ENCODE measurements at regions of chr6 and their contacts with region 1.

Region 1: DNA sequence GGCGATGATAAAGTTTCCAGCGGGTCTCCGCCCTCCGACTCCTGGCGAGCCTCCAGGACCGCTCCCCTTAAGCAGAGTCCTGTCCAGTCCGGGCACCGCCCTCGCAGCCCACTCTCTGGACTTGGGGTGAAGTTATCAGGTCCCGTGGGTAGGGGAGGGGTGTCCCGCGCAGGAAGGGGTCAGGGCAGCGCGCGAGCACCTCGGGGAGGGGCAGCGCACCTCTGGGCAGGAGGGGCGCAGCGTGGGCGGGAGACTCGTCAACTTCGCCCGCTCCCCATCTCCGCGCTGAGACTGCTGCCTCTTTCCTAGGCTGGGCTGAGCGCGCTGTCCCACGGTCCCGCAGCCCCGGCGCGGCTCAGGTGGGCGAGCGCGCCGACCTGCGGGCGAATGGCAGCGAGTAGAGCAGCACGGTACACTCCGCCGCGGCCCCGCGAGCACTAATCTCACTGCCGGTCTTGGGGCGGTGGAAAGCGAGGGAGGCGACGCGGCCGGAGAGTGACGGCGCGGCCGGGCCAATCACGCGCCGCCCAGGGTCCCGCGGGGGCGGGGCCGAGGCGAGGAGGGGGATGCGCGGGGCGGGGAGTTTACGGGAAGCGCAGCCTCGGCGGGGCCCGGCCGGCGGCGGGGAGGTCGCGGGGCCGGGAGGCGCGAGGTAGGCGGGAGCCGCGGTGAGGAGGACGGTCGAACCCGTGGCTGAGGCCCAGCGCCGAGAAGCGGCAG is at the start of gene MAN1A1:
- DNase-seq: peak; percentile 93
- H3K4me3 ChIP-seq: peak within 1 kb of the TSS; percentile 58 to 82 (median 76)
- H3K27ac ChIP-seq: peak within 1 kb of the TSS; percentile 95 to 99 (median 96)
- H3K4me1 ChIP-seq: peaks cover 5 to 35% (median 28%) of the 10 kb centered on the region in 4 donors
- H3K27me3 ChIP-seq: no peaks in the 10 kb centered on the region
- CTCF ChIP-seq: no peak
- EP300 ChIP-seq: no peak
- POLR2A ChIP-seq: peak; percentile 94
- total RNA-seq, gene MAN1A1: 52.7 to 123 (median 97.1) TPM

Region 2: GRCh38 chr6:119129148-119129967 is 220.1 kb before region 1 on chr6:
- in situ Hi-C with region 1: loop called in 1 of 4 experiments (anchors 25 kb)
- intact Hi-C with region 1: no loop called
- DNase-seq: no peak
- H3K4me3 ChIP-seq: no peak overlapping the region
- H3K27ac ChIP-seq: no peak overlapping the region
- H3K4me1 ChIP-seq: peaks cover 0 to 19% (median 12%) of the 10 kb centered on the region in 4 donors
- H3K27me3 ChIP-seq: no peaks in the 10 kb centered on the region
- CTCF ChIP-seq: peak; percentile 74 to 88 (median 85)
- EP300 ChIP-seq: no peak
- POLR2A ChIP-seq: no peak

Region 3: DNA sequence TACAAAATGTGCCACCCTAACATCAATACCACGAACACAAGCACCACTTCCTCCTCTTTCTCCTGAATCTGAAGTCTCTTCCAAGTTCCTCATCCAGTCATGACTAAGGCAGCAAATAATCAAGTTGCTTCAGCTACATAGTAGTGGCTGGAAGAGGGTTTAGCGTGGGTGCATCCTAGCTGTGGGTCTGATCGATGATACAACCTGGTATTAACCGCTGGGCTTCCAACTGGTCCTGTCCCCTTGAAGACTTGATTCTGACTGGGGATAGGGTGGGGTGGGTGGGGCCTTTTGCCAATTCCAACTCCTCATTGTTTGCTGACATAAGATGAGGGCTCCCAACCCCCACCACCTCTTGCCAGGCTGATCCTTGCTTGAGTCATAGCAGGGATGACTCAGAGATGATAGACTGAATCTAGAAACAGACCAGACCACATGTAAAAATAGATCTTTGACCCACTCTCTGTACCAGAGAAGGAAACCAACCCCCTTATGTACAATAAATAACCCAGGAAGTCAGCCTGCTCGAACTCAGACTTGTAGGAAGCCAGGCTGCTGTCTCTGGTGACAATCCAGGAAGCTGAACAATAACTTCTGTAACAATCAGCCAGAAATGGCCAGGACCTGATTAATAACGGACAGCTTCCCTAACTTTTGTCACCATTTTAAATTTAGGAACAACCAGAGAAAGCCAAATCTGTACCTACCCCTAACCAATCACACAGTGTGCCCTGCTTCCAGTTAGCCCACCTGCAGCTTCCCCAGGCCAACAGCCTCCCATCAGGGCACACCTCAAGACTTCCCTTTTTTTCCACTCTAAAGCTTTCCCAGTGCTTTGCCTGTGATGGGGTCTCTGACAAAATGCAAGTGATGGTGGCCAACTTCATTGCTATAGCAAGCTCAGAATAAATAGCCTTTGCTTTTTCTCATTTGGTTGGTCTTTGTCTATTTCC is 202.1 kb before region 1 on chr6:
- in situ Hi-C with region 1: loop called in 1 of 4 experiments (anchors 25 kb)
- intact Hi-C with region 1: loop called (anchors 10 kb)
- DNase-seq: peak; percentile 56
- H3K4me3 ChIP-seq: no peak overlapping the region
- H3K27ac ChIP-seq: peak overlapping the region; percentile 31 to 53 (median 49)
- H3K4me1 ChIP-seq: peaks cover 10 to 23% (median 17%) of the 10 kb centered on the region in 4 donors
- H3K27me3 ChIP-seq: no peaks in the 10 kb centered on the region
- CTCF ChIP-seq: no peak
- EP300 ChIP-seq: no peak
- POLR2A ChIP-seq: no peak

Region 4: DNA sequence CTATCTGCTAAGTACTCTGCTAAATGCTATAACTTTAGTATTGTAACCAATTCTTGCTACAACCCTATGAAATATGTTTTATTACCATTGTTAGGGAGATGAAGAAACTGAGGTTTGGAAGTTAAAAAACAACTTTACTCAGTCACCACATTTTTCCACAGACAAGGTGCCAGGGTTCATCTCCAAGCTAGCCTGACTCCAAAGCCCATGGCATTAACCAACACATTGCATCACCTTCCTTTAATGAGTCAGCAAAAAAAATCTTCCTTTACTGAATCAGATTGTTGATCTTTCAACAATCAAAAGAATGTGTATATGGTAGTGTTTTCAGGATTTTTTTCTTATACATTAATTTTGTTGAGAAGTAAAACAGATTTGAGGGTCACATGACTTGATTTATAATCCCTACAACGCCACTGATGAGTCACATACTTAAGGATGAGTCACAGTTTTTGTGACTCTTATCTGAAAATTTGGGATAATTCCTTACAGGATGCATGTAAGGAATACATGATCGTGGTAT is 41.4 kb before region 1 on chr6:
- in situ Hi-C with region 1: no loop called
- intact Hi-C with region 1: loop called (anchors 2 kb)
- DNase-seq: no peak
- H3K4me3 ChIP-seq: no peak overlapping the region
- H3K27ac ChIP-seq: peak overlapping the region in 1 of 4 donors; percentile 43
- H3K4me1 ChIP-seq: peaks cover 12 to 54% (median 24%) of the 10 kb centered on the region in 4 donors
- H3K27me3 ChIP-seq: no peaks in the 10 kb centered on the region
- CTCF ChIP-seq: no peak
- EP300 ChIP-seq: no peak
- POLR2A ChIP-seq: no peak